Heart left ventricle (tissue), 16 donors: ENCODE measurements at regions of chr9 and their contacts with region 1.

Region 1: DNA sequence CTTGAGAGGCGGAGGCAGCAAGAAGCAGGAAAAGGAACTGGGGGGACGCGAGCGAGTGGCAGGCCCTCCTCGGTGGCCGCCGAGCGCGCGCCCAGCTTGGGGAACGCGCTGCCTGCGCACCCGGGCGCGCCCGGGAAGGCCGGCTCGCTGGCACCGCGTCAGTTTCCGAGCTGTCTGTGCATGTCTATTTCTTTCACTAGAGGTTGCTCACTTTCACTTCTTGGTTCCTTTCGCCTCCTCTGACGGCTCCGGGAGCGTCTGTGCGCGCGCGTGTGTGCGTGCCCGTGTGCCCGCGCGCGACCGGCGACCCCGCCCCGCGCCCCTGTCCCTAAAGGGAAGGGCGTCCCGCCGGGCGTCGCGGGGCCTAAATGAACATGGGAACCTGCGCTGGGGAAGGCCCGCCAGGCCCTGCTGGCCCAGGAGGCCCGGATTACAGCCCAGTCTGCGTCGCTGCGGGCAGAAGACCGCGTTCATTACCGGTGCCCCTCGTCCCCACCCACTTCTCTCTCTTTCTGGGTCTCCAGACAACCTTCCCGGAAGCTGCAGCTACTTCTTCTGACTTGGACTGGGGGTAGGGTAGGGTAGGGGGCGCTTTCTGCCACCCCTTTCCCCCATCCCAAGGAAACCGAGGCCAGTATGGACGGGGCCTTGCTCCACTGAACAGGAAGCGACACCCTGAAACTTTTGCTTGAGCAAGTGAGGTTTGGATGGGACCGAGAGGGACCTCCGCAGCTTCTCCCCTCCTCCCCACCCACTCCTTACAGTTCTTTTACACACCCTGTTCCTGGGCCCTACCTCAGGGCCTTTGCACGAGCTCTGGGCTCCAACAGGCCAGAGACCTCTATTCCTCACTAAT is 205.7 kb upstream of the IER5L start:
- DNase-seq: peak; percentile 85 to 92 (median 87)
- ATAC-seq: peak; percentile 68 to 92 (median 89)
- H3K4me3 ChIP-seq: peak overlapping the region; percentile 15 to 78 (median 64)
- H3K27ac ChIP-seq: peak overlapping the region; percentile 90 to 98 (median 96)
- H3K4me1 ChIP-seq: peaks cover 0 to 25% (median 15%) of the 10 kb centered on the region in 12 donors
- H3K27me3 ChIP-seq: no peaks in the 10 kb centered on the region
- CTCF ChIP-seq: peak in 5 of 12 donors; percentile 26 to 47 (median 35)
- POLR2A ChIP-seq: peak in 1 of 2 donors; percentile 41

Region 2: DNA sequence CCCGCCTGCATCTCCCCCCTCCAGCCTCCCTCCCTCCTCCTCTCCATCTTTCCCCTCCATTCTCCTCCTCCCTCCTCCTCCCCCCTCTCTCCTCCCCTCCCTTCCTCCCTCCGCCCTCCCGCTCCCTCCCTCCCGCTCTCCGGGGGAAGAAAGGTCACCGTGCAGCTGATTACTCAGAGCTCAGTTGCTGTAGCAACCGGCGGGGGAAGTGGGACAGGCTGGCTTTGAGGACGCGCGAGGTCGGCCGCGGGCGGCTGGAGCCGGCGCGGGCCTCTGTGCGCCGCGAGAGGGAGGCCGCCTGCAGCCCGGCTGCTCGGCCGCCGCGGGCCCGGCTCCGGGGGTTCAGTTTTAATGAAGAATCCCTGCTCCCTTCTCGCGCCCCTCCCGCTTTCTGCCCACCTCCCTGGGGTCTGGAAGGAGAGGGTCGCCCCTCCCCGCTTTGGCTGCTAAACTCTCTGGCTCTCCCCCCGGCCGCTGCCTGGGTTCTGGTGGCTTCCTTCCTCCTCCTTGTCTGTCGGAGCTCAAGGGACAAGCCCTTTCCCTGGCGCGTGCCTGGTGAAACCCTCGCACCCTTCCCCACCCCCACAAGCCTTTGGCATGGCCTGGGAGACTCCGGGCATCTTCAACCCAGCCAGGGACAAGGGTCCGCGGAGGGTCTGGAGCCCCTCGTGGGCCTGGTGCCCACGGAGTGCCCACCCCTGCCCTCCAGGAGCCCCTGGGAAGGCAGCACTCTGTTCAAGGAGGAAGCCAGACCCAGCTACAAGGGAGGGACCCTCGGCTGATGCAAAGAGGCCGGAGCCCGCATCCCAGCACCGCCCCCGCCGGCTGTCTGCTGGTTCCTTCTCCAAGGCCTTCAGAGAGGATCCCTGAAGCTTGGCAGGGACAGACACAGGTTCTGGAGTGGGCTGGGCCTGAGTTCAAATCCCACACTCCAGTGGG is 76.8 kb after region 1 on chr9:
- intact Hi-C with region 1: loop called in 1 of 10 experiments (anchors 2 kb)
- DNase-seq: peak; percentile 97 to 99 (median 98)
- ATAC-seq: peak; percentile 86 to 94 (median 92)
- H3K4me3 ChIP-seq: peak overlapping the region; percentile 16 to 60 (median 51)
- H3K27ac ChIP-seq: peak overlapping the region; percentile 91 to 100 (median 98)
- H3K4me1 ChIP-seq: peaks cover 9 to 52% (median 43%) of the 10 kb centered on the region in 12 donors
- H3K27me3 ChIP-seq: no peaks in the 10 kb centered on the region
- CTCF ChIP-seq: peak in 8 of 12 donors; percentile 5 to 51 (median 28)
- POLR2A ChIP-seq: peak; percentile 39 to 79